OCI-LY7 (cell line): ENCODE measurements at regions of chr6 and their contacts with region 1.

Region 1: DNA sequence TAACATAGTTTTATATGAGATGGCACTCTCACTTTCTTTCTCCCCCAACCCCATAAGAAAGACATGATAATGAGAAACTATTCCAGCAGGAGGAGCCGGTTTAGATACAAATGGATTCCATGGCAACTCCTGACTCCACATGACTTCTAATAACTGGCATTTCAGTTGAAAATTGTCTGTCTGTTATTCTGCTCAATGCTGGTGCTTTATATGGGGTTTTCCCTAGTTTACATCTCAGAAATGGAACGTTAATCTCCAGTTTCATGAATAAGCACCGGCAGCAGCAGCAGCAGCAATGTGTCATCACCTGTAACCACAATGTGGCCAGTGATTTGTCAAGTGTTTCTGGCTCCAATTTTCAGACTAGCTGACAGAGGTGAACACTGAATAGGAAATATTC is 8.0 kb upstream of the SIM1 start:
- DNase-seq: no peak
- H3K4me3 ChIP-seq: no peak overlapping the region
- H3K27ac ChIP-seq: no peak overlapping the region
- H3K4me1 ChIP-seq: no peaks in the 10 kb centered on the region
- CTCF ChIP-seq: no peak

Region 2: DNA sequence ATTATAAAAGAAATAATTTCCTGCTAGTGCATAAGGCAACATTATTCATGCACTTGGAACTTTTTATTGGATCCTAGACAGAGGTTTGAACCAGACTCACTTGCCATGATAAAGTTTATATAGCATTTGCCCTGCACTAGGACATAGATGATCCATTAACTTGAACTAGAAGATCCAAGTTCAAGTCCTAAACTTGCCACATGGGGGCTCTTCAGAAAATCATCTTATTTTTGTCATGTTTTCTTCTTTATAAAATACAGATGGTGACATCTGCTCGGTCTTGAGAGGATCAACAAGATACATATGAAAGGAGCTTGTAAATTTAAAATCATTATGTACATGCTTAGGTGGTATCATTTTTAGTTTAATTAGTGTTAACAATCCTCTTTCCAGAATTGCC is 102.4 kb before region 1 on chr6:
- CTCF ChIA-PET with region 1: no interaction called
- POLR2A ChIA-PET with region 1: no interaction called
- intact Hi-C with region 1: loop called (anchors 5 kb)
- DNase-seq: peak; percentile 4
- H3K4me3 ChIP-seq: no peak overlapping the region
- H3K27ac ChIP-seq: no peak overlapping the region
- H3K4me1 ChIP-seq: no peaks in the 10 kb centered on the region
- CTCF ChIP-seq: peak; percentile 65